HAP-1 (cell line): ENCODE measurements at regions of chr22 and their contacts with region 1.

Region 1: DNA sequence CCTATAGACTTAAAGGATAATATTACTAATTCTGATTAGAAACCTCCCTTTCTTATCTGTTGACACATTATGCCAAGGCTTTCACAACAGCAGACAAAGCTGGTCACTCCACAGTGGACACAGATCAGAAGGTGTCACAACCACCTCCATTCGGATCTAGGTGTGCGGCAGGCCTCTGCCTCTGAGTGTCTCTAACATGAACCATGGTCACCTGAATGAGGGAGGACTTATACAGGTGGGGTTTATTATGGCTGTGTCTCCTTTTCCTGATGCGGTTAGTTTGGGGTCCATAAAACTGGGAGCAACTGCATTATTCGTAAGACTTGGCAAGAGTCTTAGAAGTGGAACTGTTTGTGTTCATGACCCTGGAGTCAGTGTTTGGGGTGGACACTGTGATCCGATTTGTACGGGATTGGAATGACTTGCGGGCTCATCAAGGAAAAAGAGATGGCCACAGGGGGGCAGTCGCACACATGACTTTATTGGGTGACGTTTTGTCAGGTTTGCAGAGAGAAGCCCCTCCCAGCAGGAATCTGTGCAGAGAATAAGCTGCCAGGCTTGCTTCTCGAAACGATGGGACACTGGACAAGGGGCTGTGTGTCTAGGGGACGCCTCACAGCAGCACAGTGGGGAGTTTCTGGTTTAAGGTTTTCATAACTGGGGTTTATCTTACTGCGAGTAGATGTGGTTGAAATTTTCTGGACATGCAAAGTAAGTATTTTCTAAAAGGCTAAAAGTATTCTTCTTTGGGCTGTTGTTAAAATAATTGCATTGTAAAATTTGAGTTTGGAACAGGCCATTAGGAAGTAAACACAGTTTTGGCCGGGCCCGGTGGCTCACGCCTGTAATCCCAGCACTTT is 90.6 kb downstream of the GAB4 start:
- DNase-seq: peak; percentile 63 to 88
- H3K4me3 ChIP-seq: no peak overlapping the region
- H3K4me1 ChIP-seq: no peaks in the 10 kb centered on the region
- H3K27me3 ChIP-seq: peaks cover 16% of the 10 kb centered on the region

Region 2: DNA sequence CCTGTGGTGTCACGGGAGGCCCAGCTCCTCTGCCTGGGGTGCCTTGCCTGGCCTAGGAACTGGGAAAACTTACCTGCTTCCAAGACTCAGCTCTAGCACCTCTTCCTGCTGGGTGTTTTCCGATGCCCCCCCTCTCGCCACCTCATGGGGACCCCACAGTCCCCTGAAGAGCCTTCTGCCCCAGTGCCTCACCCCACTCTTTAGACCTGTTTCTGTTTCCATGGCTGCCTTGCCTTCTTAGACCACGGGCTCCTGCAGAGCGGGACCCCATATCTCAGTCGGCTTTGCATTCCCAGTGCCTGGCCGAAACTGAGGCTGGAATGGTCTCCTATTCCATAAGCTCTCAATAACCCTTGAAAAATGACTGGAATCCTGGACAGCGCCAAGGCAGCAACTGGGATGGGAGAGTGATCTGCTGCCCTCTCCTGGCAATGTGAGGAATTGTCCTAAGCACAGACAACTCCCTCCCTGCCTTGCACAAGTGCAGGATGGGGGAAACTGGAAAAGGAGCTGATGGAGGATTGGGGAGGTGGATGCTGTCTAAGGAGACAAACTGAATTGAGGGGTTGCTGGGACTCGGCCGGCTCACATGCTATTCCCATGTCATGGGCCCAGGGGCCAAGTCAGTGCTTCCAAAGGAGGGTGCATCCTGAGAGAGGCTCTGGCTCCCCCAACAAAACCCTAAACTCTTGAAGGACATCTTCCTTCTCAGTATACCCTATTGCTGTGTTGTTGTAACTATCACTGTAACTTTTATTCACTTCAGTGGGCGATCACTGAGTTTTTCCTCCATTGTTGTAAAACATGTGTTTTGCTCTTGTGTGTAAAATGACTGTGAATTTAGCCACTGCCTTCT is 140.8 kb after region 1 on chr22:
- in situ Hi-C with region 1: loop called (anchors 10 kb)
- DNase-seq: peak; percentile 70 to 82
- H3K4me3 ChIP-seq: no peak overlapping the region
- H3K4me1 ChIP-seq: peaks cover under 1% of the 10 kb centered on the region
- H3K27me3 ChIP-seq: peaks cover 4% of the 10 kb centered on the region; the same call in 1 of the 2 replicates